CD14-positive monocyte (primary cell): ENCODE measurements at regions of chr1 and their contacts with region 1.

Region 1: GRCh38 chr1:196660852-196661251 is 9.0 kb downstream of the CFH start:
- DNase-seq: peak in 1 of 3 donors; percentile 10
- H3K4me3 ChIP-seq: no peak overlapping the region
- H3K4me3 Mint-ChIP-seq: peak overlapping the region in 1 of 2 donors; percentile 50
- H3K27ac ChIP-seq: no peak overlapping the region
- H3K27ac Mint-ChIP-seq: no peak overlapping the region
- H3K4me1 ChIP-seq: no peaks in the 10 kb centered on the region
- H3K4me1 Mint-ChIP-seq: peaks cover 5% of the 10 kb centered on the region
- H3K27me3 ChIP-seq: no peaks in the 10 kb centered on the region
- H3K27me3 Mint-ChIP-seq: peaks cover 0 to 1% (median 0%) of the 10 kb centered on the region in 3 donors
- CTCF ChIP-seq: peak; percentile 76

Region 2: DNA sequence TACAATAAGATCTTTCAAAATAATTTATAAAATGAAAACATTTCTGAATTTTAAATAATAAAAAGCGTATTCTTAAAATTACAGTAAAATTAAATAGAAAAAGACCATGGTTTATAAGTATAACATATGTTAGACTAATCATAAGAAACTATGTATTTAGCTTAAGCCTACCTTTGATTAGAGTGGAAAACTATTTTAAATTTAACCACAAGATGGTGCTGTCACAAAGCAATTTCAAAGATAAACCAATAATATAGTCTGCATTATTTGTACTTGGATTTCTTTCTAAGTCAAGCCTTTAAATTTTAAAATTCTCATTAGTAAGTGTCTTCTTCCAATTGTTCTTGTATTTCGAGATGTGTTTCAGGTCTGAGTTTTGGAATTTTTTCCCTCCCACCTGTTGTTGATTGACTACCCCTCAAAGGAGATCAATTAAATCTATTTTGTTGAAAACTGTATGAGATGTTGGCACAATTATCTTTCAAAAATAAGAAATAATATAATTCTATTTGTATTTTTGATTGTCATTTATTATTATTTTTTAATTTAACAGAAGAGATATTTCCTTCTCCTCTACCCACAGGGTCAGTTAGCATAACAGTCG is 512.4 kb before region 1 on chr1:
- intact Hi-C with region 1: loop called (anchors 5 to 10 kb)
- DNase-seq: no peak
- H3K4me3 ChIP-seq: no peak overlapping the region
- H3K4me3 Mint-ChIP-seq: no peak overlapping the region
- H3K27ac ChIP-seq: no peak overlapping the region
- H3K27ac Mint-ChIP-seq: no peak overlapping the region
- H3K4me1 ChIP-seq: no peaks in the 10 kb centered on the region
- H3K4me1 Mint-ChIP-seq: peaks cover 2% of the 10 kb centered on the region
- H3K27me3 ChIP-seq: no peaks in the 10 kb centered on the region
- H3K27me3 Mint-ChIP-seq: no peaks in the 10 kb centered on the region
- CTCF ChIP-seq: peak; percentile 61

Region 3: DNA sequence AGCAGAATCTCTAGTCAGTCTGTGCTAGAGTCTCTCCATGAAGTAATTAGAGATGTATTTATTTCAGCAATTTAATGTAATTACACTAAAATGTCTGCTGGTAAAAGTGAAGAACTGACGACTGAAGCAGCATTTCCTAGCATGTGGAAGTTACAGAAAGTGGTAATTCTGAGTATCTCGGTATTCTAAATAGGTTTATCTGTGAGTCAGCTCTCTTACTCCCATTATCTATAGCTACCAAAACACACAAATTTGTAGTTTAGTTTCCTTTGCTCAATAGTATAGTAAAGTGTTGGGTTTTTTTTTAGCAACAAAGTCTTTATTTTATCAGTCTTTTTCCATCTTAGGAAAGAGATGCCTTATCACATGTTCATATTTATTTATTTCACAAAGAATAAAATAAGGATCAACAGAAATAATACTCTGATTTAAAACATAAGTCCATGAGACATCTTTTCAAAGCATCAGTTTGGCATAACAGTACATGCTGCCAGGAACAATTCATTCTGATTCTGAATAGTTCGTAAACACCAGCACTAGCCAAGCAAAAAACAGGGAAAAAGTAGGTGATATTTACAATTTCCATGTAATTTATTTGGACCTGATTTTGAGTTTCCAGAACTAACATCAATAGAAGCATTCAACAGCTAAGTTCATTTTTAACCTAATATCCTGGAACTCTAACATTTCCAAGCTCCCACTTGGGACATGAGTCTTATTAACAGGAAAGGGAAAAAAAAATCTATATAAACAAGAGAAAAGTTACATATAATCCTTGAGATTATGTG is 128.9 kb before region 1 on chr1:
- intact Hi-C with region 1: no loop called
- DNase-seq: no peak
- H3K4me3 ChIP-seq: no peak overlapping the region
- H3K4me3 Mint-ChIP-seq: no peak overlapping the region
- H3K27ac ChIP-seq: no peak overlapping the region
- H3K27ac Mint-ChIP-seq: no peak overlapping the region
- H3K4me1 ChIP-seq: no peaks in the 10 kb centered on the region
- H3K4me1 Mint-ChIP-seq: no peaks in the 10 kb centered on the region
- H3K27me3 ChIP-seq: no peaks in the 10 kb centered on the region
- H3K27me3 Mint-ChIP-seq: no peaks in the 10 kb centered on the region
- CTCF ChIP-seq: no peak